Spleen (tissue), 13 donors: ENCODE measurements at regions of chr6 and their contacts with region 1.

Region 1: DNA sequence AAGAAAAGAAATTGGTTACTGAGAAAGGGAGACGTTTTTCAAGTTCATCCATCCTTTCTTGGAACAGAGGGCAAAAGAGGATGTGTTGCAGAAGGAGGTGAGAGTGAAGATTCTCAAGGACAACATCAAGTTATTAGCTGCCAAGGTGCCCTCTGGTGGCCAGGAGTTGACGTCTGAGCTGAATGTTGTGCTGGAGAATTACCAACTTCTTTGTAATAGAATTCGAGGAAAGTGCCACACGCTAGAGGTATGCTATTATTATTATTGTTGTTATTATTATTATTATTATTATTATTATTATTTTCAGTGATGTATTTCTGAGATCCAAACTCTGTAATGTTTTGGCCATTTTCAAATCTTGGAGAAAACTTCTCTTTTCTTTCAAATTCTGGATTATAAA is 197.0 kb downstream of the UTRN start:
- DNase-seq: peak; percentile 87
- H3K4me3 ChIP-seq: no peak overlapping the region
- H3K27ac ChIP-seq: peak overlapping the region in 1 of 8 donors; percentile 22
- H3K4me1 ChIP-seq: peaks cover 0 to 9% (median 0%) of the 10 kb centered on the region in 6 donors
- H3K27me3 ChIP-seq: no peaks in the 10 kb centered on the region
- CTCF ChIP-seq: peak; percentile 54 to 77 (median 69)
- POLR2A ChIP-seq: no peak

Region 2: DNA sequence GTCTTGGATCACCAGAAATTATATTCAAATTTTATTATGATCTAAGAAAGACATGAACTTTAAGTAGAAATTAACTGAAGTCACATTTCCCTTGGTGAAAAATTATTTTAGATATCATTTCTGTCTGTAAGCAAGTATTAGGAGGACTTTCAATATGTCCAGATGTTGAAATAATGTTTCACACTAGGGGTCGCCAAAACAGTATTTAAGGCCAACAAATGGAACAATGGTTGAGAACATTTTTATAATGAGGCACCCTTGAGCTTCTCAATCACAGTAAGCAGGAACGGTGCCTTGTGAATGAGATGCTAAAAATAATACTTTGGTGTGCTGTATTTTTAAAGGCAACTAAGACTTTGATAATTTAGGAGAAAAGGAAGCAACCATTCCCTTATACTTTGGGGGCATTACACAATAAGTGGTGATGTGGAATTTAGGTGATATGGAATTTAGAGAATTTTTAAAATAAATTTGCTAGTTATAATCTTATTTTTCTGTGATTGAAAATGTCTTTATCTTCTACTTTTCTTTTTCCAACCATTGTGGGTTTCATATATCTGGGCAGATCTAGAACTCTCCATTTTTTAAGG is 377.1 kb before region 1 on chr6:
- intact Hi-C with region 1: loop called (anchors 5 kb)
- DNase-seq: no peak
- H3K4me3 ChIP-seq: no peak overlapping the region
- H3K27ac ChIP-seq: no peak overlapping the region
- H3K4me1 ChIP-seq: peaks cover 0 to 8% (median 0%) of the 10 kb centered on the region in 6 donors
- H3K27me3 ChIP-seq: no peaks in the 10 kb centered on the region
- CTCF ChIP-seq: peak; percentile 35 to 83 (median 69)
- POLR2A ChIP-seq: no peak

Region 3: GRCh38 chr6:144284783-144285547 is 197.2 kb before region 1 on chr6 and contains the start of gene UTRN:
- intact Hi-C with region 1: loop called (anchors 10 kb)
- DNase-seq: peak; percentile 92
- H3K4me3 ChIP-seq: peak within 1 kb of the TSS; percentile 76 to 97 (median 91)
- H3K27ac ChIP-seq: peak within 1 kb of the TSS; percentile 81 to 97 (median 94)
- H3K4me1 ChIP-seq: peaks cover 7 to 40% (median 22%) of the 10 kb centered on the region in 6 donors
- H3K27me3 ChIP-seq: no peaks in the 10 kb centered on the region
- CTCF ChIP-seq: peak in 1 of 11 experiments; percentile 26
- POLR2A ChIP-seq: peak in 1 of 3 donors; percentile 50
- total RNA-seq, gene UTRN: 273 to 539 (median 391) TPM

Region 4: DNA sequence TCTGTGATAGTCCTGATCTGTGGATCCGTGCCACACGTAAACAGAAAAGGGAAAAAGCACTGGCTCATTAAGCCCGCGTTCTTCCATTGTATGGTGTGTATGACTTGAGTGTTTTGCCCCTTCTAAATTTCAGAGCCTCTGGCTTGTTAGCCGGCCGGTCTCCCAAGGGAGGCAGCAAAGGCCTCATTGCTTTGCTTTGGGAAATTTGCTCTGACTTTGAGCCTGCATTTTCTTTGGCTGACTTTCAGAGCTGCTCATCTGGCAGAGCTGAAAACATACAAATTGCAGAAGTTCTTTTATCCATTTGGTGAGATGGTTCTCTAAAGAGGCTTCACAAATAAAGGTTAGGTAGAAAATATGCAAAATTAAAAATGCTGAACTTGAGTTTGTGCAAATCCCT is 74.0 kb before region 1 on chr6:
- intact Hi-C with region 1: loop called (anchors 2 kb)
- DNase-seq: no peak
- H3K4me3 ChIP-seq: no peak overlapping the region
- H3K27ac ChIP-seq: no peak overlapping the region
- H3K4me1 ChIP-seq: peaks cover 12 to 85% (median 47%) of the 10 kb centered on the region in 6 donors
- H3K27me3 ChIP-seq: no peaks in the 10 kb centered on the region
- CTCF ChIP-seq: no peak
- POLR2A ChIP-seq: no peak

Region 5: GRCh38 chr6:144534180-144534579 is 52.0 kb after region 1 on chr6:
- intact Hi-C with region 1: no loop called
- DNase-seq: no peak
- H3K4me3 ChIP-seq: no peak overlapping the region
- H3K27ac ChIP-seq: no peak overlapping the region
- H3K4me1 ChIP-seq: no peaks in the 10 kb centered on the region
- H3K27me3 ChIP-seq: no peaks in the 10 kb centered on the region
- CTCF ChIP-seq: no peak
- POLR2A ChIP-seq: no peak

Region 6: GRCh38 chr6:145028144-145028818 is 546.1 kb after region 1 on chr6:
- intact Hi-C with region 1: no loop called
- DNase-seq: no peak
- H3K4me3 ChIP-seq: no peak overlapping the region
- H3K27ac ChIP-seq: no peak overlapping the region
- H3K4me1 ChIP-seq: no peaks in the 10 kb centered on the region
- H3K27me3 ChIP-seq: peaks cover 0 to 6% (median 0%) of the 10 kb centered on the region in 7 donors
- CTCF ChIP-seq: no peak
- POLR2A ChIP-seq: no peak